ENCODE measurements at regions of chr6 and their contacts with region 1.

Region 1: DNA sequence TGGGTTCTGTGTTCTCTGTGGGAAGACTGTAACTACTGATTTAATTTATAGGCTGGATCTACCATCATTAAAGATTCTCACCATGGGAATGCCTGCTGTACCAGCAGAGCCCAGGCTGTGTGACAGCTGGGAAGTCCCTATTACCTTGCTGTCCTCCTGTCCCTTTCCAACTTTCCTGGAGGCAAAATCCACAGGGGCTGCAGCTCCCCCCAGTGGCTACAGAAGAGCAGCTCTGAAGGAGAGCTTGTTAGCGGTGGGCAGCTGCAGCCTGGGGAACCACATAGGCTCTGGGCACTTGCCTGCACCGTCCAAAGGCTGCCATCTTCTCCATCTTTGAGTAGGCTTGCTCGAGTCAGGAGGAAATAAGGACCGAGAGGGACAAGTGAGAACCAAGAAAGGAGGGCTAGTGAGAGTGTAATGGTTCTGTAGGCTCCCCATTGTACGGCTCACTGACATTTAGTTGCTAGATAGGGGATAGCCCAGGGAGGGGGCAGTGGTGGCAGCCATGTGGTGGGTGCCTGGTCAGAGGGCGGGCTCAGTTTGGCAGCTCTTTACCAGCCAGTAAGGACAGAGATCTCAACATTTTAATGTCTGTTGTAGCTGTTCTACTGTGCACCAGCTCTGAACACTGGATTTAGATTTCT is 155.1 kb upstream of the MLIP start:
- DNase-seq: peak; percentile 32
- H3K4me3 ChIP-seq: no peak overlapping the region
- H3K27ac ChIP-seq: no peak overlapping the region
- H3K27me3 ChIP-seq: no peaks in the 10 kb centered on the region
- CTCF ChIP-seq: peak; percentile 92

Region 2: DNA sequence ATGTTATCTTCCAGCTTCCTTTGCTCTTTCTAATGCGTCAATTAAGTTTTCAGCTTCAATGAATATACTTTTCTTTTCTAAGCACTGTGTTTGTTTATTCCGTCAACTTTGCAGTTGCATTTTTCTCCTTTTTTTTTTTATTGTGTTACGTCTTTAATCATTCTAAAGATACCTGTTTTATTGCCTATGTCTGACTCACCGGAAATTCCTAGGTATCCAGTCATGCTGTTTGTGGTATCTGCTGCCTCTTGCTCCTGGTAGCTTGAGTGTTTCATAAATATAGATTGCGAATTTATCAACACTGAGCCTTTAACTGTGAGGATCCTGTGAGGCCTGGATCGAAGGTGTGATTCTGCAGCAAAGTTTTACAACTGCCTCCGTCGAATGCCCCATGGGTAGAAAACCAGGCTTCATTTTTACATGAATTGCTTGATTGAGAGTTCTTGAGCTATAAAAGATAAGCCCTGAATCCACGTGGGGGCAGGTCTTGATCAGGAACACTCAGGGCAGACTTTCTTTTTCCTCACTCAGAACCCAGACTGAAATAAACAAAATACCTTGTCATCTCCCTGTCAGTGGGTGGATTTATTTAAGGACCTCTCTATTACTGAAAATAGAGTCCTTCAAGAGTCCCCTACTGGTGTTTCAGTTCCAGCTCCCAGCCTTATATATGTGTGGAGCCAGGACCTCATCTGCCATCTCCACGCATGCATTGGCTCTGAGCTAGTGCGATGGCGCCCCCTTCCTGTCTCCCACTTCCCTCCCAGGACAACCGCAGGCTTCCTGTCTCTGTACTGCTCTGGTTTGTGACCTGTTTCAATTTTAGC is 221.5 kb before region 1 on chr6:
- CTCF ChIA-PET with region 1: interaction called, 202 read pairs
- POLR2A ChIA-PET with region 1: no interaction called
- DNase-seq: peak; percentile 30
- H3K4me3 ChIP-seq: no peak overlapping the region
- H3K27ac ChIP-seq: peak overlapping the region; percentile 54
- H3K27me3 ChIP-seq: no peaks in the 10 kb centered on the region
- CTCF ChIP-seq: peak; percentile 46

Region 3: GRCh38 chr6:53794720-53795253 is 161.4 kb before region 1 on chr6 and contains the start of gene LRRC1:
- CTCF ChIA-PET with region 1: interaction called, 68 read pairs
- POLR2A ChIA-PET with region 1: interaction called, 23 read pairs
- DNase-seq: peak; percentile 80
- H3K4me3 ChIP-seq: peak within 1 kb of the TSS; percentile 97
- H3K27ac ChIP-seq: peak within 1 kb of the TSS; percentile 88
- H3K27me3 ChIP-seq: no peaks in the 10 kb centered on the region
- CTCF ChIP-seq: no peak
- polyA plus RNA-seq, gene LRRC1: 11.5 and 13.9 TPM in 2 replicates

Region 4: GRCh38 chr6:53943395-53943794 is 12.8 kb before region 1 on chr6:
- CTCF ChIA-PET with region 1: interaction called, 20 read pairs
- POLR2A ChIA-PET with region 1: no interaction called
- DNase-seq: no peak
- H3K4me3 ChIP-seq: no peak overlapping the region
- H3K27ac ChIP-seq: no peak overlapping the region
- H3K27me3 ChIP-seq: no peaks in the 10 kb centered on the region
- CTCF ChIP-seq: no peak

Region 5: DNA sequence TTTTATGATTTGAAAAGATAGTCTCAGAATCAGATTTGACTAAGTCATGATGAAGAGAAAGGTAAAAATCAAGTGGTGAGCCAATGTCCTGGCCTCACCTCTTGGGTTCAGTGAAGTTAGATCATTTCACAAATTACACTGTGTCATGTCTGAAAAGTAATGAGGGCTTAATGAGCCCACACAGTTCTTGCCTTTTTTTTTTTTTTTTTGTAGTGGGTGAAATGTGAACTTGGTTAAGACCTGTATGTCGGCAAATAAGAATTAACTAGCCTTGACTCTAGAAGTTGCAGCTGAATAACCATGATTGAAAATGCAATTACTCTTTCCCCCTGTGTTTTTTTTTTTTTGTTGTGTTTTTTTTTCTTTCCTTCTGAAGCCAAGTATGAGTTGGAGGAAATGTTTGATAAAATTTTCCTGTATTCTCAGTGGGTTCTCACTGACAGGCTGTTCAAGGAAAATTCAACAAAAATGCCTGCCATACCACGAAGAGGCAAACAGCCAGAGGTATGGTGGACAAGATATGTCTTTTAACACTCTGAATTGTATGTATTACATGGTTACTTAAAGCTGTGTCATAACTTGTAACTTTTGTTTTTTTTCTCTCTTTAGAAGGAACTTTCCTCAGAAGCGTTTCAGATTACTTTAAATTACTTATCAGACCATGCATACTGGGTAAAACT is 19.9 kb after region 1 on chr6:
- CTCF ChIA-PET with region 1: interaction called, 11 read pairs
- POLR2A ChIA-PET with region 1: no interaction called
- DNase-seq: no peak
- H3K4me3 ChIP-seq: no peak overlapping the region
- H3K27ac ChIP-seq: no peak overlapping the region
- H3K27me3 ChIP-seq: no peaks in the 10 kb centered on the region
- CTCF ChIP-seq: no peak

Region 6: GRCh38 chr6:54010340-54011276 is 54.4 kb after region 1 on chr6:
- CTCF ChIA-PET with region 1: no interaction called
- POLR2A ChIA-PET with region 1: no interaction called
- DNase-seq: no peak
- H3K4me3 ChIP-seq: no peak overlapping the region
- H3K27ac ChIP-seq: no peak overlapping the region
- H3K27me3 ChIP-seq: no peaks in the 10 kb centered on the region
- CTCF ChIP-seq: no peak

Region 7: GRCh38 chr6:54085541-54085940 is 129.4 kb after region 1 on chr6:
- CTCF ChIA-PET with region 1: no interaction called
- POLR2A ChIA-PET with region 1: no interaction called
- DNase-seq: peak; percentile 70
- H3K4me3 ChIP-seq: no peak overlapping the region
- H3K27ac ChIP-seq: peak overlapping the region; percentile 32
- H3K27me3 ChIP-seq: no peaks in the 10 kb centered on the region
- CTCF ChIP-seq: no peak